ENCODE measurements at regions of chr6 and their contacts with region 1.

Region 1: DNA sequence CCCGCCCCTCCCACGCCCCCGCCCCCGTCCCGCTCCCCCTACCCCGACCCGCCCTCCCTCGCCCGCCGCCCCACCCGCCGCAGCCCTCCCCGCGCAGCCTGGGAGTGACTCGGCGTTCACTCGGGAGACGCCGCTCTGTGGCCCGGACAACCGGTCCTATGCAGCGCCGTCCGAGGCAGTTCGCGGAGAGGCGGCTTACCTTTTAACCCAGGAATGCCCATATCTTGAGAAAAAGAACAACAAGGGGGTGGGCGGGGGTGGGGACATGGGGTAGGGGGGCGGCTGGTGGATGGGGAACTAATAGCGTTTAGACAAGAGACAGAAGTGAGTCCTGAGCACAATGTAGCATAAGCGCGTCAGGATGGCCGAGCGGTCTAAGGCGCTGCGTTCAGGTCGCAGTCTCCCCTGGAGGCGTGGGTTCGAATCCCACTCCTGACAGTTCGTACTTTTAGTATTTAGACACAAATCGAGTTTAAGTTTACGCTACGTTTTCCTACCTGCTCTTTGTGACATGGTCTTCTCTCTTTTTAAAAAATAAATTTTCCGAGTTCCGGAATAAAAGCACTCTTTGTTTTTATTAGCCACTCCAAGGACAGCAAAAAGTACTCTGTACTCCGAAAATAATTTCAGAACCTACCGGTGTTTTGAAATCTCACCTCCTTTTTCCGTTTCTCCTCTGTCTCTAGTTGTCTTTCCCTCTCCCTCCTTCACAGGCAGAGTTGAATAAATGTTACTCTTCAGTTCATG is 17.1 kb upstream of the HMGN4 start:
- DNase-seq: peak; percentile 87 to 94 (median 91)
- ATAC-seq: peak; percentile 90 to 92 (median 91)
- H3K4me3 ChIP-seq: peak overlapping the region; percentile 28 to 76 (median 62)
- H3K27ac ChIP-seq: peak overlapping the region; percentile 89 to 99 (median 95)
- H3K4me1 ChIP-seq: peaks cover 0 to 39% (median 10%) of the 10 kb centered on the region in 12 donors
- H3K27me3 ChIP-seq: no peaks in the 10 kb centered on the region
- CTCF ChIP-seq: no peak
- POLR2A ChIP-seq: no peak

Region 2: GRCh38 chr6:26366504-26366903 is 154.5 kb before region 1 on chr6:
- intact Hi-C with region 1: loop called in 1 of 10 experiments (anchors 5 kb)
- DNase-seq: no peak
- ATAC-seq: no peak
- H3K4me3 ChIP-seq: peak overlapping the region in 7 of 12 donors; percentile 42 to 84 (median 74)
- H3K27ac ChIP-seq: peak overlapping the region in 1 of 12 donors; percentile 96
- H3K4me1 ChIP-seq: peaks cover 0 to 41% (median 15%) of the 10 kb centered on the region in 12 donors
- H3K27me3 ChIP-seq: no peaks in the 10 kb centered on the region
- CTCF ChIP-seq: no peak
- POLR2A ChIP-seq: no peak

Region 3: GRCh38 chr6:26432663-26433201 is 88.3 kb before region 1 on chr6:
- intact Hi-C with region 1: no loop called
- DNase-seq: peak in 2 of 5 donors; percentile 34 to 36
- ATAC-seq: peak in 1 of 4 donors; percentile 20
- H3K4me3 ChIP-seq: no peak overlapping the region
- H3K27ac ChIP-seq: peak overlapping the region in 1 of 12 donors; percentile 30
- H3K4me1 ChIP-seq: peaks cover 0 to 8% (median 0%) of the 10 kb centered on the region in 12 donors
- H3K27me3 ChIP-seq: no peaks in the 10 kb centered on the region
- CTCF ChIP-seq: no peak
- POLR2A ChIP-seq: no peak

Region 4: DNA sequence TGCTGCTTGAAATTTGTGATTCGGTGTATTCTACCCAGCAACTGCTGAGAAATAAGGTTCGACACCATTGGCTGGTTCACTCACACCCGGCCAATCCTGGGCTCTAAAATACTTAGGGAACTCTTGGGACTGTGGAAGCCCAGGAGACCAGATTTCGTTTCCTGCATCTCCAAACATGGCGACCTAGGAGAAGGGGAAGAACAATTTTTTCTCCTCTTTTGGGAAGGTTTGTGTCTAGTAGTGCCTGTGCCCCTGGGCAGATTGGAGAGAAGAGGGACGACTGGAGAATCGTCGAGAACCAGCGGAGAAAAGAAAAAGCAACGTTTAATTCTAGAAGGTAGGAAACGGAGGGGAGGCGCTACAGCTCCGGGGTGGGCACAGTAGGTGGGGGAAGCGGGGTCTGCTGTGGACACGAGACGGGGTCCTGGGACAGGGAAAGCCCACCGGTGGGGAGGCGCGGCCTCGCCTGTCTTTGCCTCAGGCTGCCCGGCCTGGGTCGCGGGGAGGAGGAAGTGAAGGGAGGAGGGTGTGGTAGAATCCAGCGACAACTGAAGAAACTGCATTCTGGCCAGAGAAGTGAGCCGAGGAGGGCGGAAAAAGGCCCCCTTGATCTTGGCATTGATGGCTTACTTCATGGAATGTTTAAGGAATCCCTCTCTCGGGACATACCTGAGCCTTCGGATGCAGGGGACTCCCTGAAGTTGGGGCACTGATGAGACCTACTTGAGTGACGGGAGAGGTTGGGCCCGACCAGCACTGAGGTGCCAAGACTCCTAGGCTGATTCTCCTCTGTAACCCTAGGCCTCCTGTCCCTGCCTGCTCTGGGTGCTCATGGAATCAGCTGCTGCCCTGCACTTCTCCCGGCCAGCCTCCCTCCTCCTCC is 63.0 kb before region 1 on chr6 and contains the start of gene BTN2A1:
- intact Hi-C with region 1: loop called in 2 of 10 experiments (anchors 5 kb)
- DNase-seq: peak; percentile 82 to 88 (median 85)
- ATAC-seq: peak; percentile 99
- H3K4me3 ChIP-seq: peak within 1 kb of the TSS; percentile 59 to 91 (median 88)
- H3K27ac ChIP-seq: peak within 1 kb of the TSS; percentile 84 to 98 (median 94)
- H3K4me1 ChIP-seq: peaks cover 0 to 69% (median 37%) of the 10 kb centered on the region in 12 donors
- H3K27me3 ChIP-seq: no peaks in the 10 kb centered on the region
- CTCF ChIP-seq: no peak
- POLR2A ChIP-seq: peak in 1 of 2 donors; percentile 23
- total RNA-seq, gene BTN2A1: 9.2 to 26.2 (median 14.8) TPM

Region 5: GRCh38 chr6:26473758-26474438 is 47.1 kb before region 1 on chr6:
- intact Hi-C with region 1: loop called in 4 of 10 experiments (anchors 5 kb)
- DNase-seq: peak; percentile 78 to 86 (median 82)
- ATAC-seq: peak; percentile 97 to 98 (median 98)
- H3K4me3 ChIP-seq: peak overlapping the region; percentile 4 to 62 (median 50)
- H3K27ac ChIP-seq: peak overlapping the region; percentile 84 to 97 (median 88)
- H3K4me1 ChIP-seq: peaks cover 0 to 51% (median 7%) of the 10 kb centered on the region in 12 donors
- H3K27me3 ChIP-seq: no peaks in the 10 kb centered on the region
- CTCF ChIP-seq: no peak
- POLR2A ChIP-seq: peak in 1 of 2 donors; percentile 71

Region 6: DNA sequence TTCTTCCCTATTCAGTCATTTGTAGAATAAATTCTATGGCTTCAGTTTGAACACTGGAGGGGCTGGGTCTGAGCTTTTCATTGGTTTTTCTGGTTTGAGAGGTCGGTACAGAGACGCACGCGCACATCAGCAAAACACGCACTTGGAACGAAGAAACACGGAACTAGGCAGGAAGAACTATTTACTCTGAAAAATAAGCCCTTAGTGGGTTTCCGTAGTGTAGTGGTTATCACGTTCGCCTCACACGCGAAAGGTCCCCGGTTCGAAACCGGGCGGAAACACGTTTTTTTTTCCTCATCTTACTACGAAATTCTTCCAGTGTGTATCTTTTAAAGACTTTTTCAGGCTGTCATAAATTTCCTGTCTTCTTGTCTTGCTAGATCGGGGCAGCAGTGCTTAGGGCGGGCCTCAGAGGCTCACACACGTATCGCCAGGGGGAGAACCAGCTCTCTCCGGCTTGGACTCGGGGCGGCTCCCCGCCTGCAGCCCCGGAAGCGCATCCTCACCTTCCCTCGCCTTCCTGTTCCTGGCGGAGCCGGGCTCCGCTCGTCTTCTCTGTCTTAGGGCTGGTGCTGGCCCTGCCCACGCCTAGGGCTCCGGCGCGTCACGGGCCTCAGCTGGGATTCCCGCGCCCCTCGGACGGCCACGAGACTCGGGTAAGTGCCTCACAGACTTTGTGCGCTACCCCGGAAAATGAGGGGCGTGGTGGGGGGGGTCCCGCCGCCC is 17.0 kb after region 1 on chr6 and contains the start of gene HMGN4:
- intact Hi-C with region 1: loop called in 5 of 10 experiments (anchors 1 to 2 kb)
- DNase-seq: peak; percentile 82 to 91 (median 87)
- ATAC-seq: peak; percentile 86 to 90 (median 90)
- H3K4me3 ChIP-seq: peak within 1 kb of the TSS; percentile 58 to 94 (median 76)
- H3K27ac ChIP-seq: peak within 1 kb of the TSS; percentile 75 to 96 (median 92)
- H3K4me1 ChIP-seq: peaks cover 0 to 48% (median 25%) of the 10 kb centered on the region in 12 donors
- H3K27me3 ChIP-seq: no peaks in the 10 kb centered on the region
- CTCF ChIP-seq: peak in 3 of 12 donors; percentile 19 to 40 (median 30)
- POLR2A ChIP-seq: peak in 1 of 2 donors; percentile 56
- total RNA-seq, gene HMGN4: 22.4 to 34.7 (median 32.1) TPM

Region 7: GRCh38 chr6:26553635-26554446 is 32.8 kb after region 1 on chr6:
- intact Hi-C with region 1: loop called in 4 of 10 experiments (anchors 1 to 2 kb)
- DNase-seq: peak; percentile 66 to 85 (median 72)
- ATAC-seq: peak; percentile 85 to 93 (median 88)
- H3K4me3 ChIP-seq: peak overlapping the region; percentile 26 to 66 (median 60)
- H3K27ac ChIP-seq: peak overlapping the region; percentile 18 to 90 (median 84)
- H3K4me1 ChIP-seq: peaks cover 0 to 33% (median 10%) of the 10 kb centered on the region in 12 donors
- H3K27me3 ChIP-seq: no peaks in the 10 kb centered on the region
- CTCF ChIP-seq: no peak
- POLR2A ChIP-seq: no peak

Region 8: GRCh38 chr6:27406092-27406491 is 885.1 kb after region 1 on chr6:
- intact Hi-C with region 1: no loop called
- DNase-seq: no peak
- ATAC-seq: no peak
- H3K4me3 ChIP-seq: no peak overlapping the region
- H3K27ac ChIP-seq: no peak overlapping the region
- H3K4me1 ChIP-seq: no peaks in the 10 kb centered on the region
- H3K27me3 ChIP-seq: no peaks in the 10 kb centered on the region
- CTCF ChIP-seq: no peak
- POLR2A ChIP-seq: no peak